ENCODE measurements at regions of chr5 and their contacts with region 1.

Region 1: DNA sequence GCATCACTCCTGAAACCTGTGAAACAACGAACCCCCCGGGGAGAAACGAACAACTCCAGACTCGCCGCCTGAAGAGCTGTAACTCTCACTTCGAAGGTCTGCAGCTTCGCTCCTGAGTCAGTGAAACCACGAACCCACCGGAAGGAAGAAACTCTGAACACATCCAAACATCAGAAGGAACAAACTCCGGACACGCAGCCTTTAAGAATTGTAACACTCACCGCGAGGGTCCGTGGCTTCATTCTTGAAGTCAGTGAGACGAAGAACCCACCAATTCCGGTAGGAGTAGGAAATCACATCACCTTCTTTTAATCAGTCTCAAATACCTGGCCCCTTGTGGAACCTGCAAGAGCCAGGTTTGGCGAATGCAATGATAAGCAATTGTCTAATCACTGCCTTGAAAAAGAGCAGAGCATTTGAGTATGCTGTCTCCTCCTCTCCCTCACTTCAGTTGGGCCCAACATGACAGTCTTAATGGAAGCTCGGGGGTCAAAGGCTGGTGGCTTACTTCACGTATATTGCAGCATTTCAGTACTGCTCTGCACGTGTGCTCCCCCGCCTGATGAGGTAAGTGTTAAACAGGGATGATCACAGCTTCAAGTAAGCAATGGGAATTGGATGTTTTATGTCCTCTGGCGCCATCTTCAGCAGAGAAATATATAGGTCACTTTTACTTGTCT is 473 bp downstream of the IRGM start:
- DNase-seq: peak in 1 of 2 donors; percentile 92
- ATAC-seq: peak; percentile 93 to 98 (median 95)
- H3K4me3 ChIP-seq: peak overlapping the region; percentile 24
- H3K4me3 Mint-ChIP-seq: peak overlapping the region; percentile 86
- H3K27ac ChIP-seq: peak overlapping the region; percentile 54
- H3K27ac Mint-ChIP-seq: peak overlapping the region; percentile 78 to 88
- H3K4me1 ChIP-seq: peaks cover 10% of the 10 kb centered on the region
- H3K4me1 Mint-ChIP-seq: peaks cover 5 to 19% of the 10 kb centered on the region in 2 donors
- H3K27me3 ChIP-seq: no peaks in the 10 kb centered on the region
- H3K27me3 Mint-ChIP-seq: no peaks in the 10 kb centered on the region
- CTCF ChIP-seq: peak; percentile 72

Region 2: DNA sequence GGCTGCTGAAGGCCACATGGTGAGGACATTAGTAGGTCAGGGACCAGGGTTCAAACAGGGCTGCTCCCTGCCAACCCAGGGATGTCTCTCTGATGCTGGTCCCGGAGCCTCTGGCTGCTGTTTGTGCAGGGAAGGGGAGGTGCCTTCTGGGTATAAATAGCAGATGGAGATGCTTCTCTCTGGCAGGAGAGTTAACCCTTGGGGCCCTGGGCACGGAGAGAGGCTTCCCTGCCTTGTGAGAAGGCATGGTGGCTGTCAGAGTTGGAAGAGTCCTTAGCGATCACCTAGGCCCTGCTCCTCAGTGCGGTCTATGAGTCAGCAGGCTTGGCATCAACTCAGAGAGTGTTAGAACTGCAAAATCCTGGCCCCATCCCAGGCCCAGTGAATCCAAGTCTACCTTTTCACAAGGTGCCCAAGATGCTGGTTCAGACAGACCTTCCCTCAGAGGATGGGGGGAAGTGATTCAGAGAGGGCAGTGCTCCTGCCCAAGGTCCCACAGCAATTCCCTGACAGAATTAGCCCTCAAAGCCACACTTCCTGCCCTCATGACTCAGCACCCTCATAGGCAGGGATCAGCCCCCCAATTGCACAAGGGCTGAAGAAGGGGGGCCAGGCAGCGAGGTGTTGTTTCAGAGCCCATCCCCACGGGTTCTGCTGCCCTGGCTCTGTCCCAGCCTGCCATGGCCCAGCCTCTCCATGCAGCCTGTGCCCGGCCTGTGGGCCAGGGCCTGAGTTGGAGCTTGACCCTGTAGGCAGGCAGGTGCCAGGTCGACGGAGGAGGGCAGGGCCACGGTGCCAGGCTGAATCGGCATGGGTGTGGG is 582.8 kb before region 1 on chr5:
- intact Hi-C with region 1: no loop called
- DNase-seq: no peak
- ATAC-seq: no peak
- H3K4me3 ChIP-seq: no peak overlapping the region
- H3K4me3 Mint-ChIP-seq: no peak overlapping the region
- H3K27ac ChIP-seq: no peak overlapping the region
- H3K27ac Mint-ChIP-seq: no peak overlapping the region
- H3K4me1 ChIP-seq: no peaks in the 10 kb centered on the region
- H3K4me1 Mint-ChIP-seq: no peaks in the 10 kb centered on the region
- H3K27me3 ChIP-seq: no peaks in the 10 kb centered on the region
- H3K27me3 Mint-ChIP-seq: peaks cover 0 to 2% of the 10 kb centered on the region in 2 donors
- CTCF ChIP-seq: no peak

Region 3: DNA sequence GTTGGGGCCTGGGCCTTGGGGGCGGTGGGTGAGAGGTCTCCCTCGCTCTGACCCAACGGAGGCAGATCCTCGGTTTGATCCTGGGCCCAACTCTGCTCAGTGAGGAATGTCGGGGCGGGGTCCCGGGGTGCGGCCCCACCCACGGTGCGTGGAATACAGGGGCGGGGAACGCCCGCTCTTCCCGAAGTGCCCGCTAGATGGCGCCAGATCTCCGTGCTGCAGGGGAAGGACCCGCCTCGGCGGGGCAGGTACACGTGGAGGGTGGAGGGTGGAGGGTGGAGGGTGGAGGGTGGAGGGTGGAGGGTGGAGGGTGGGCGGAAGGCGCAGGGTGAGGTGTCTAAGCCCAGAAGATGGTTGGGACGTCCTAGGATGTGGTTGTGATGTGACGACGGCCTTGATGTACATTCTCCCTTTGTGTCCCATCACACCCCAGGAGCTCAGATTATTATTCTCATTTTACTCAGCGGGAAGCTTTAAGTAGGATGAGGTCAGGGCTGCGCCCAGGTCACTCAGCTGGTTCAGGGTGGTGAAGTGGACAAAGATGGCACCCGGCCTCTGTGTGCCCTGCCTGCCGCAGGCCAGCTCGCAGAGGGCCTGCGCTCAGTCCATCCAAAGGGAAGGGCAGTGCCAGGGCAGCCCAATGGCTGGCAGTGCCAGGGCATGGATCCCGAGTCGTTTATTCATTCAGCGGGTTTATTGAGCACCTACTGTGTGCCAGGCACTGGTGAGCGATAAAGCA is 387.8 kb before region 1 on chr5:
- intact Hi-C with region 1: loop called (anchors 2 kb)
- DNase-seq: peak; percentile 83 to 90
- ATAC-seq: peak; percentile 95 to 99 (median 99)
- H3K4me3 ChIP-seq: no peak overlapping the region
- H3K4me3 Mint-ChIP-seq: no peak overlapping the region
- H3K27ac ChIP-seq: no peak overlapping the region
- H3K27ac Mint-ChIP-seq: peak overlapping the region in 1 of 2 donors; percentile 70
- H3K4me1 ChIP-seq: peaks cover 26% of the 10 kb centered on the region
- H3K4me1 Mint-ChIP-seq: peaks cover 4 to 17% of the 10 kb centered on the region in 2 donors
- H3K27me3 ChIP-seq: no peaks in the 10 kb centered on the region
- H3K27me3 Mint-ChIP-seq: no peaks in the 10 kb centered on the region
- CTCF ChIP-seq: peak; percentile 77

Region 4: DNA sequence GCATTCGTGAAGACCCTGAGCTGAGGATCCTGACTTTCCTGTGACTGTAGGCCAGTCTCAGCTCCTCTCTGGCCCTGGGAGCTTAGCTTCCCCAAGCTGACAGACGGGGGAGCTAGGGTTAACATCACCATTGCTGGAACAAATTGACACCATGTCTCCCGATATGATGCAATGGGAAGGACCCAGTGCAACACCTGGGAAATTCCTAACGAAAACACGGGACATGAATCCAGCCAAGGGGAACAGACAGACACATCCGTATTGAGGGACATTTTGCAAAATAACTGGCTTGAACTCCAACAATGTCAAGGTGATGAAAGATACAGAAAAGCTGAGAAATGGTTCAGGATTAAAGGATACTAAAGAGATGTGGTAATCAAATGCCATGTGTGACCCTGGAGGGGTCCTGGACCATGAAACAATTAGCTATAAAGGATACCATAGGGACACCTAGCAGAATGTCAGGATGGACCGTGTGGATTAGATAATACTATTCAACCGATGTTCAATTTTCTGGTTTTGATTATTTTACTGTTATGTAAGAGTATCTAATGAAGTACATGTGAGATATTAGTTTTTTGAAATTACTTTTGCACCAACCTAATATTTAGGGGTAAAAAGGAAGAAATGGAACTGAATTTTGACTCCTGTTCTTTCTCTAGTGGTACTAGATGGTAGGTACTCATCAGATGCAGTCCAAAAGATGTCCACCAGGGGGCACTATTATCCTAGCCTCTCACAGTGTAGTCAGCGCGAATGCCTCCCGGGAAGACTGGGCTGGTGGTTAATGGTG is 286.2 kb before region 1 on chr5:
- intact Hi-C with region 1: loop called (anchors 1 kb)
- DNase-seq: peak; percentile 70 to 92
- ATAC-seq: peak; percentile 93 to 99 (median 99)
- H3K4me3 ChIP-seq: no peak overlapping the region
- H3K4me3 Mint-ChIP-seq: no peak overlapping the region
- H3K27ac ChIP-seq: no peak overlapping the region
- H3K27ac Mint-ChIP-seq: no peak overlapping the region
- H3K4me1 ChIP-seq: no peaks in the 10 kb centered on the region
- H3K4me1 Mint-ChIP-seq: no peaks in the 10 kb centered on the region
- H3K27me3 ChIP-seq: no peaks in the 10 kb centered on the region
- H3K27me3 Mint-ChIP-seq: no peaks in the 10 kb centered on the region
- CTCF ChIP-seq: peak; percentile 95

Region 5: GRCh38 chr5:150758531-150759333 is 88.1 kb before region 1 on chr5 and contains the start of gene DCTN4:
- intact Hi-C with region 1: loop called (anchors 1 kb)
- DNase-seq: peak; percentile 90 to 99
- ATAC-seq: peak; percentile 89 to 97 (median 90)
- H3K4me3 ChIP-seq: peak within 1 kb of the TSS; percentile 83
- H3K4me3 Mint-ChIP-seq: no peak within 1 kb of the TSS
- H3K27ac ChIP-seq: peak within 1 kb of the TSS; percentile 97
- H3K27ac Mint-ChIP-seq: no peak within 1 kb of the TSS
- H3K4me1 ChIP-seq: peaks cover 14% of the 10 kb centered on the region
- H3K4me1 Mint-ChIP-seq: peaks cover 15 to 32% of the 10 kb centered on the region in 2 donors
- H3K27me3 ChIP-seq: no peaks in the 10 kb centered on the region
- H3K27me3 Mint-ChIP-seq: peaks cover 4 to 14% of the 10 kb centered on the region in 2 donors
- CTCF ChIP-seq: no peak
- total RNA-seq, gene DCTN4: 90.0 to 108 (median 92.0) TPM

Region 6: GRCh38 chr5:150778517-150779396 is 68.0 kb before region 1 on chr5 and contains the start of gene SMIM3:
- intact Hi-C with region 1: loop called (anchors 5 kb)
- DNase-seq: peak; percentile 53 to 79
- ATAC-seq: peak; percentile 59 to 72 (median 65)
- H3K4me3 ChIP-seq: peak within 1 kb of the TSS; percentile 80
- H3K4me3 Mint-ChIP-seq: peak within 1 kb of the TSS; percentile 91
- H3K27ac ChIP-seq: peak within 1 kb of the TSS; percentile 54
- H3K27ac Mint-ChIP-seq: peak within 1 kb of the TSS; percentile 47 to 93
- H3K4me1 ChIP-seq: peaks cover 45% of the 10 kb centered on the region
- H3K4me1 Mint-ChIP-seq: peaks cover 51 to 56% of the 10 kb centered on the region in 2 donors
- H3K27me3 ChIP-seq: no peaks in the 10 kb centered on the region
- H3K27me3 Mint-ChIP-seq: peaks cover 0 to 8% of the 10 kb centered on the region in 2 donors
- CTCF ChIP-seq: peak; percentile 19
- total RNA-seq, gene SMIM3: 7.0 to 9.4 (median 8.9) TPM

Region 7: GRCh38 chr5:150801117-150801927 is 45.5 kb before region 1 on chr5:
- intact Hi-C with region 1: loop called (anchors 5 kb)
- DNase-seq: peak in 1 of 2 donors; percentile 75
- ATAC-seq: peak in 2 of 3 donors; percentile 34 to 65
- H3K4me3 ChIP-seq: no peak overlapping the region
- H3K4me3 Mint-ChIP-seq: no peak overlapping the region
- H3K27ac ChIP-seq: no peak overlapping the region
- H3K27ac Mint-ChIP-seq: no peak overlapping the region
- H3K4me1 ChIP-seq: peaks cover 4% of the 10 kb centered on the region
- H3K4me1 Mint-ChIP-seq: no peaks in the 10 kb centered on the region
- H3K27me3 ChIP-seq: no peaks in the 10 kb centered on the region
- H3K27me3 Mint-ChIP-seq: peaks cover 4 to 25% of the 10 kb centered on the region in 2 donors
- CTCF ChIP-seq: peak; percentile 48